B cell (primary cell): ENCODE measurements at regions of chr1 and their contacts with region 1.

Region 1: DNA sequence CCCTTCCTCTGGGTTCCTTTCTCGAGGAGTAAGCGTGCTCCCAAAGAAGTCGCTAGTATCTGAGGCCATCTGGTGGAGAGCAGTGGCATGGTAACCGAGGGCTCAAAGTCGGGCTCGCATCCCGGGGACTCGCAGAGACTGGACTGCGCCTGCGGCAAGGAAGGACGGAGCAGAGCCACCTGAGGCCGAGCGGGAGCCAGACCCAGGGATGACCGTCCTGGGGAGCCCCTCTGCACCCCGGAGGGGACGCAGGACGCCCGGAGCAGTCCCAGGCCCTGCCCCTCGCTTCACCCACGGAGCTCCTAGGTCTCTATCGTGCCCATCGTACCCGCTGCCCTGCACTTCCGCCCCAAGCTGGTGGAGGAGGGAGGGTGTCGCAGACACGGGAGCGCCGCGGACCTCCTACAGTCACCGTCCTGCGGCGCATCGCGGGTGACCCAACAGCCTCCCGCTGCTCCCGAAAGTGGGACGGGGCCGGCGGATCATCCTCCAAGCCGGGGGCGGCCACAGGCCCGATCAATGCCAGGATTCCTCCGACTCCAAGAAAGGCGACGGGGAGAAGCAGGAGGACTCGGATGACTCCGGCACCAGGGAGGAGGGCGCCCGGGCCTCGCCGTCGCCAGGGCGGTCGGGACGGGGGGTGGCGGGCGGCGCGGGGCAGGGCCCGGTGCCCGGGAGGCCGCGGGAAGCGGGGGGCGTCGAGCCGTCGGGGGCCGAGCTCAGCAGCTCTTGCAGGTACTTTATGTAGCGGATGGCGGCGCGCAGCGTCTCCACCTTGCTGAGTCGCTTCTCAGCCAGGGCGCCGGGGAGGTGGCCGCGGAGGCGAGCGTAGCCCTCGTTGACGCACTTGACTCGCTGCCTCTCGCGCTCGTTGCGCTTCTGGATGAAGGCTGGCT is 2.3 kb upstream of the CACNA1S start:
- DNase-seq: peak; percentile 78
- ATAC-seq: peak; percentile 88
- H3K4me3 ChIP-seq: peak overlapping the region; percentile 31 to 77 (median 58)
- H3K4me3 Mint-ChIP-seq: peak overlapping the region; percentile 87
- H3K27ac ChIP-seq: no peak overlapping the region
- H3K27ac Mint-ChIP-seq: no peak overlapping the region
- H3K4me1 ChIP-seq: peaks cover 4 to 13% of the 10 kb centered on the region in 2 donors
- H3K4me1 Mint-ChIP-seq: peaks cover 4% of the 10 kb centered on the region
- H3K27me3 ChIP-seq: peaks cover 0 to 32% (median 14%) of the 10 kb centered on the region in 4 experiments
- H3K27me3 Mint-ChIP-seq: peaks cover 29% of the 10 kb centered on the region
- CTCF ChIP-seq: peak; percentile 75

Region 2: DNA sequence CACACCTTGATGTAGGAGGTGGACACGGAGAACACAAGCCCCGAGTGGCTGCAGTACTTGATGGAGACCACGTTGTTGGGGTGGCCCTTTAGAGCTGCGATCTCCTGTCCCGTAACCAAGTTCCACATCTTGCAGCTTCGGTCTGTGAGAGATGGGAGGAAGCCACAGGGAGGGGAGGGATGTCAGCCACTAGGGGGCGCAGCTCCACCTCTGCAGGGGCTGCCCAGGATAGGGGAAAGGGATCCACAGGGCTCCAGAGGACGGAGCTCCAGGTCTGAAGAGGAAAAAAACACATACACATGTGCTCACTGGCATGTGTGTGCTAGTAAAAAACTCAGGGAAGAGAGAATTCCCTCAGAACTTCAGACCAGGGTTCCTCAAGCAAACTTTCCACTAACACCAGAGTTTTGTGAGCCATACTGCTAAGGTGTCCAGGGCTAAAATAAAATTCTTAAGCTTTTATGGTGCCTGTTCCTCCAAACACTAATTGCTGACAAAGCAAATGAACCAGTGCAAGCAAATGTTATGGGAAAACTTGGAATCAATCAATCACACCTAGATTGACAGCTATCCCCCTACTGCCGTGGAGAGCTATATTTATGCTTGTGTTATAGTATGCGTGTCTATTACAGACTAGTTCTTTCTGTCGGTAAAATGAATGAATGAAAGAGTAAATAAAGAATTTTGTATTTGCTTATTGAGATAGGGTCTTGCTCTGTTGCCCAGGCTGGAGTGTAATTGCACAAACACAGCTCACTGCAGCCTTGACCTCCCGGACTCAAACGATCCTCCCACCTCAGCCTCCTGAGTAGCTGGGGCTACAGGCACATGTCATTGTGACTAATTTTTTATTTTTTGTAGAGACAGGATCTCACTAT is 134.7 kb before region 1 on chr1:
- CTCF ChIA-PET with region 1: interaction called, 21 read pairs
- POLR2A ChIA-PET with region 1: no interaction called
- intact Hi-C with region 1: no loop called
- DNase-seq: peak; percentile 68
- ATAC-seq: peak; percentile 54
- H3K4me3 ChIP-seq: no peak overlapping the region
- H3K4me3 Mint-ChIP-seq: no peak overlapping the region
- H3K27ac ChIP-seq: no peak overlapping the region
- H3K27ac Mint-ChIP-seq: no peak overlapping the region
- H3K4me1 ChIP-seq: no peaks in the 10 kb centered on the region
- H3K4me1 Mint-ChIP-seq: no peaks in the 10 kb centered on the region
- H3K27me3 ChIP-seq: no peaks in the 10 kb centered on the region
- H3K27me3 Mint-ChIP-seq: no peaks in the 10 kb centered on the region
- CTCF ChIP-seq: peak; percentile 80

Region 3: DNA sequence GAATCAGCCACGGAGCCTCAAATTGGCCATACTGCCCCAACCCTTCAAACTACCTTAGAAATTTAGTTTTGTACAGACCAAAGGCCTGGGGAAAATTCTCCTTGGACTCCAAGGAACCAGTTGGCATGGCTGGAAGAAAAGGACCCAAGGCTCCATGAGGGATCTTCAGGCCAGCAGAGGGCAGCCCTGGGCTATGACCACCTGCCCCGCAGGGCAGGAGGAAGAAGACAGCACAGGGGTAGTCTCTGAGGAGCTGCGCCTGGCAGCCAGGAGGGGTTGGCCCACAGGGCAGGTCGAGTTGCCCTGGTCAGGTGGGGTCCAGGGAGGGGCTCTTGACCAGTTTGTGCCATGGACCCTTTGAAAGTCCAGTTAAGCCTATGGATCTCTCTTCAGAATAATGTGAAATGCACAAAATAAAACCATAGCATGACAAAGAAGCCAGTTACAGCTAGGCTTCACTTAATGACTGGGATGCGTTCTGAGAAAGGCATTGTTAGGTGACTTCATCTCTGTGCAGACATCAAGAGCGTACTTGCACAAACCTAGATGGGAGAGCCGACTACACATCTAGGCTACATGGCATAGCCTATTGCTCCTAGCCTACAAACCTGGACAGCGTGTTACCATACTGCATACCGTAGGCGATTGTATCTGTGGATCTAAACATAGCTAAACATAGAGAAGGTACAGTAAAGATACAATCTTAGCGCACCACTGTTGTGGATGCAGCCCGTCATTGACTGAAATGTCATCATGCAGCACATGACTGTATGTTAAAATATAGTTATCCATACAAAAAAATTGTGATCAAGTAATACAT is 28.4 kb before region 1 on chr1:
- CTCF ChIA-PET with region 1: interaction called, 9 read pairs
- POLR2A ChIA-PET with region 1: no interaction called
- intact Hi-C with region 1: loop called (anchors 1 kb)
- DNase-seq: no peak
- ATAC-seq: no peak
- H3K4me3 ChIP-seq: no peak overlapping the region
- H3K4me3 Mint-ChIP-seq: no peak overlapping the region
- H3K27ac ChIP-seq: no peak overlapping the region
- H3K27ac Mint-ChIP-seq: no peak overlapping the region
- H3K4me1 ChIP-seq: no peaks in the 10 kb centered on the region
- H3K4me1 Mint-ChIP-seq: no peaks in the 10 kb centered on the region
- H3K27me3 ChIP-seq: peaks cover 0 to 7% (median 2%) of the 10 kb centered on the region in 4 experiments
- H3K27me3 Mint-ChIP-seq: peaks cover 22% of the 10 kb centered on the region
- CTCF ChIP-seq: no peak

Region 4: GRCh38 chr1:201268604-201269151 is 154.2 kb after region 1 on chr1:
- CTCF ChIA-PET with region 1: no interaction called
- POLR2A ChIA-PET with region 1: no interaction called
- intact Hi-C with region 1: no loop called
- DNase-seq: no peak
- ATAC-seq: no peak
- H3K4me3 ChIP-seq: no peak overlapping the region
- H3K4me3 Mint-ChIP-seq: no peak overlapping the region
- H3K27ac ChIP-seq: no peak overlapping the region
- H3K27ac Mint-ChIP-seq: no peak overlapping the region
- H3K4me1 ChIP-seq: no peaks in the 10 kb centered on the region
- H3K4me1 Mint-ChIP-seq: no peaks in the 10 kb centered on the region
- H3K27me3 ChIP-seq: peaks cover 0 to 9% (median 2%) of the 10 kb centered on the region in 4 experiments
- H3K27me3 Mint-ChIP-seq: peaks cover 42% of the 10 kb centered on the region
- CTCF ChIP-seq: no peak